ENCODE measurements at regions of chr3 and their contacts with region 1.

Region 1: GRCh38 chr3:161305095-161305991 is 66.0 kb downstream of the SPTSSB start:
- DNase-seq: peak; percentile 1
- H3K4me3 ChIP-seq: no peak overlapping the region
- H3K27ac ChIP-seq: no peak overlapping the region
- H3K27me3 ChIP-seq: peaks cover 3% of the 10 kb centered on the region
- CTCF ChIP-seq: peak; percentile 82

Region 2: DNA sequence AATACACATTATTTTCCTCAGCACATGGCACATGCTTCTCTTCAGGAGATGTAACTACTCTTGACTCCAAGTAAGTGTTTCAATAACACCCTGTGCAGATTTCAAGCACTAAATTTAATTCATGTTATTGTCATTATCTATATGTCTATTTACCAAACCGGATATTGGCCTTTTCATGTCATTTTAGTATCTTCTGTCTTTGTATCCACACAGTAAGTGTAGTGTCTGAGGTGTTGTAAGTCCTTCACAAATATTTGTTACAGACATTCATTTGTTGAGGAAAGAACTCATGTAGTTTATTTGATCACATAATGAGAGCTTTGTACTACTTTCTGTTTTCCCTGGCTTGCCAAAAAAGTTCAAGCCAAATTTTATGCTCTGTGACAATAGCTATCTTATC is 17.4 kb after region 1 on chr3:
- CTCF ChIA-PET with region 1: interaction called, 12 read pairs
- POLR2A ChIA-PET with region 1: no interaction called
- DNase-seq: no peak
- H3K4me3 ChIP-seq: no peak overlapping the region
- H3K27ac ChIP-seq: no peak overlapping the region
- H3K27me3 ChIP-seq: no peaks in the 10 kb centered on the region
- CTCF ChIP-seq: no peak

Region 3: DNA sequence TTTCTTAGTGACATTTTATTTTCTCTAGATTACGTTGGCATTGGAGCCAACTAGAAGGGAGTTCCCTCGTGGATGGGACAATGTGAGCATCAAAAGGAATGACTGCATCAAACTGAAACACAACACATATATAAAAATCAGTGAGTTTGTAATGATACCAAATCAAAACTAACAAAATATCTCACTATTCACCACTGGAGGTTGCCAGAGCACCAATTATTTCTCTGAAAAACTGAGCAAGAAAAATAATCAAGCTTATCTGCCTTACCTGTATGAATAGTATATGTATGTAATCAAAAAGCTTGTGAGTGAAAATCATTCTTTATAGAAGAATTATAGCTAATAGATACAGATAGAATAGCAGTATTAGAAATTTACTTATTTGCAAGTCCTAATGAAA is 144.4 kb after region 1 on chr3:
- CTCF ChIA-PET with region 1: no interaction called
- POLR2A ChIA-PET with region 1: no interaction called
- DNase-seq: no peak
- H3K4me3 ChIP-seq: no peak overlapping the region
- H3K27ac ChIP-seq: no peak overlapping the region
- H3K27me3 ChIP-seq: no peaks in the 10 kb centered on the region
- CTCF ChIP-seq: no peak